ENCODE measurements at regions of chr1 and their contacts with region 1.

Region 1: DNA sequence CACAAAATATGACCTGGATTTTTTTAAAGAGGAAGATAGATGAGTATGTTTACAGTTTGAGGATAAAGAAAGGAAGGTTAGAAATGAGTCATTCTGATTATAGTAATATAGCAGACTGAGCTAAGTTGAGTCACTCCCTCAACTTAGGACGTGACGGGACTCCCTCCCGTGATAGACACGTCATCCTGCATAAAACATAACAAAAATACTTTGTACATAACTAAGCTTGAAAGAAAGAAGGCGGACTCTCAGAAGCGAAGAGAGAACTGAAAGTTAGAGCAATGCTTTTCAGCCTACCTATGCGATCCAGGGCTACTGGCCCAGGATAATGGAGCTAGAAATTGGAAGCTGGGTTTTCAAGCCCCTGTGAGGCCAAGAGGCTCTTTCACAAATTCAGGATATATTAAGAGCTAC is 53.0 kb upstream of the DESI2 start:
- DNase-seq: peak; percentile 43 to 91
- H3K4me3 ChIP-seq: peak overlapping the region; percentile 57; the same call in 1 of the 2 replicates
- H3K27ac ChIP-seq: peak overlapping the region; percentile 79
- H3K4me1 ChIP-seq: peaks cover 18% of the 10 kb centered on the region
- H3K27me3 ChIP-seq: no peaks in the 10 kb centered on the region
- CTCF ChIP-seq: no peak

Region 2: GRCh38 chr1:244461245-244462071 is 138.5 kb before region 1 on chr1 and contains the start of gene CATSPERE:
- CTCF ChIA-PET with region 1: no interaction called
- POLR2A ChIA-PET with region 1: no interaction called
- intact Hi-C with region 1: loop called (anchors 2 kb)
- DNase-seq: peak; percentile 76 to 93
- H3K4me3 ChIP-seq: peak within 1 kb of the TSS; percentile 55
- H3K27ac ChIP-seq: peak within 1 kb of the TSS; percentile 9; the same call in 1 of the 2 replicates
- H3K4me1 ChIP-seq: peaks cover 11% of the 10 kb centered on the region
- H3K27me3 ChIP-seq: no peaks in the 10 kb centered on the region
- CTCF ChIP-seq: no peak
- total RNA-seq, gene CATSPERE: 0.30 and 1.2 TPM in 2 replicates

Region 3: DNA sequence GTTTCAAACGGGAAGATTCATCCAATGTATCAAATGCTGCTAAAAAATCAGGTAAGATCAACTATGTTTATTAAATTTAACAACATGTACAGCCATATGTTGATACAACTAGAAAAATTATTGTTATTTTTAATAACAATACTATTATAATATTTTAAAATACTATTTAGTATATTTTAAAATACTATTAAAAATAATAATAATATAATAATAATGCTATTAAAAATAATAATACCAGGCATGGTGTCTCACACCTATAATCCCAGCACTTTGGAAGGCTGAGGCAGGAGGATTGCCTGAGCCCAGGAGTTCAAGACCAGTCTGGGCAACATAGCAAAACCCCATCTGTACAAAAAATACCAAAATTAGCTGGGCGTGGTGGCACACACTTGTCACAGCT is 84.3 kb before region 1 on chr1:
- CTCF ChIA-PET with region 1: no interaction called
- POLR2A ChIA-PET with region 1: no interaction called
- intact Hi-C with region 1: no loop called
- DNase-seq: no peak
- H3K4me3 ChIP-seq: no peak overlapping the region
- H3K27ac ChIP-seq: no peak overlapping the region
- H3K4me1 ChIP-seq: no peaks in the 10 kb centered on the region
- H3K27me3 ChIP-seq: no peaks in the 10 kb centered on the region
- CTCF ChIP-seq: no peak

Region 4: DNA sequence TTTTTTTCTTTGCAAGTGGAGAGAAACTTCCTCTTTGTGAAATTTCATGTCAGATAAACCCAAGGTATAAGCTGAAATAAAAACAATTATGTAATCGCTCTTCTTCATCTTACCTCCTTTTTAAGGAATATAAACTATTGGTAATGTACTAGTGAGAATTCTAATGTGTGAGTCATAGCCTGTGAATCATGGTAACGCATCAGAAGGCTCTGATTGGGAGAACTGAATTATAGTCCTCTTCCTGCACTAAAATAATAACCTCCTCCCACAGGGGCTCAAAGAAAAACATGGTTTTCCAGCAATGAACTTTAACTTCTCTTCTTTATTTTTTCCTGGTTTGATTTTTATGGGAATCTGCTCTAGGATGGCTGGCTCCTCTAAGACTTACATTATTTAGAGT is 178.4 kb after region 1 on chr1:
- CTCF ChIA-PET with region 1: interaction called, 4 read pairs
- POLR2A ChIA-PET with region 1: interaction called, 14 read pairs
- intact Hi-C with region 1: no loop called
- DNase-seq: peak in 1 of 2 experiments; percentile 61
- H3K4me3 ChIP-seq: no peak overlapping the region
- H3K27ac ChIP-seq: no peak overlapping the region
- H3K4me1 ChIP-seq: 0 out of 2 replicates have a peak, but pooled peaks cover 10% of the 10 kb centered on the region
- H3K27me3 ChIP-seq: no peaks in the 10 kb centered on the region
- CTCF ChIP-seq: no peak

Region 5: DNA sequence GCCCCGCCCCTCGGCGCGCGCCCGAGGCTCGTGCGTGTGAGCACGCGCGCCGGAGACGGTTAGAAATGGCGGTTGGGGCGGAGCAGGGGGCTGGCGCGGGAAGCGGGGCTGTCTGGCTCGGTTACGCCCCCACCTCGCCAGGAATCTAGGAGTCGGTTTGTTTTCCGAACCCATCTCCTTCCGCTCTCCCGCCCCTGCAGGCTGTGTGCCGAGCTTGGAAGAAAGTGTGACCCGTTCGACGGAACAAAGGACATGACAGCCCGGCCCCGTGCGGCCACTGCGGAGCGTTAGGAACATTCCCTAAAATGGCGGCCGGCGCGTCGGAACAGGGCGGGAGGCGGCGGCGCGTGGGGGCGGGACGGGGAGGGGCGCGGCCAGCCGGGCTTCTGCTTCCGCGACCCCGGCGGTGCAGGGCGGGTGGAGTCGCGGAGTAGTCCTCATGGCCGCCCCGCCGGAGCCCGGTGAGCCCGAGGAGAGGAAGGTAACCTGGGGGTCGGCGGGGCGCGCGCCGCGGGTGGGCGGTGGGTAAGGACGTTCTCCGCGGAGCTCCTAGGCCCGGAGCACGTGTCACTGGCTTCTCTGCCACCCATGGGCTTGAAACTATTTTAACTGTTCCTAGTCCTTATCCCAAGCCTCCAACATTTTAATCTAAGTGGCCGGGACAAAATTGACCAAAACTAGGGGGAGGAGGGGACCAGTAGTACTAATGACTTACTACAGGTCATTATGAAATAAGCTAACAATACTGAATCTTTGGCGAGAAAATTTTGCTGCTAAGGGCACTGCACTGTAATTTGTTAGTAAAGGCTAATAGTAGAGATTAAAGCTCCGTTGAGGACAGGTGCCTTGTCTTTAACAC is 235.6 kb after region 1 on chr1 and contains the start of gene COX20:
- CTCF ChIA-PET with region 1: interaction called, 4 read pairs
- POLR2A ChIA-PET with region 1: no interaction called
- intact Hi-C with region 1: loop called (anchors 2 kb)
- DNase-seq: peak in 1 of 2 experiments; percentile 75
- H3K4me3 ChIP-seq: peak within 1 kb of the TSS; percentile 79
- H3K27ac ChIP-seq: peak within 1 kb of the TSS; percentile 98
- H3K4me1 ChIP-seq: peaks cover 22% of the 10 kb centered on the region
- H3K27me3 ChIP-seq: no peaks in the 10 kb centered on the region
- CTCF ChIP-seq: no peak
- total RNA-seq, gene COX20: 34.5 and 40.7 TPM in 2 replicates

Region 6: DNA sequence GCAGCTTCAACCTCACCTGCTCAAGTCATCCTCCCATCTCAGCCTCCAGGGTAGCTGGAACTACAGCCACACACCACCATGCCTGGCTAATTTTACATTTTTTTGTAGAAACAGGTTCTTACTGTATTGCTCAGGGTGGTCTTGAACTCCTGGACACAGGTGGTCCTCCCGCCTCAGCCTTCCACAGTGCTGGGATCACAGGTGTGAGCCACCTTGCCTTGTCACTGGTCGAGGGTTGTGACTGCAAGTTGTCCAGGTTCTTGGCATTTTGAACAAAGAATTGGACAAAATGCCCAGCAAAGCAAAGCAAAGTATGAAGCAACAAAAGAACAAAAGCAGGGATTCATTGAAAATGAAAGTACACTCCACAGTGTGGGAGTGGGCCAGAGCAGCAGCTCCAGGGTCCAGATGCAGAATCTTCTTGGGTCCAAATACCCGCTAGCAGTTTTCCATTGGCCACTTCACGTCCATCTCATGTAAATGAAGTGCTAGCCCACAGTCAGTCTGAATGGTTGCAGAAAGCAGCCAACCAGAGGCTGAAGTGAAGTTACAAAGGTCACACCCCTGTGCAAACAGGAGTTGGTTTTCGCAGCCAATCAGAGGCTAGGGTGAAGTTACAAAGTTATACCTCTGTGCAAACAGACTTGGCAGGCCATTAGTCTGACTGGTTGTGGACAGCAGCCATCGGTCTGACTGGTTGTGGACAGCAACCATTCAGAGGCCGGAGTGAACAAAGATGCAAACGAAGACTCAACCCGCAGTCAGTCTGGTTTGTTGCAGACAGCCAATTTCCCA is 445.3 kb after region 1 on chr1:
- CTCF ChIA-PET with region 1: no interaction called
- POLR2A ChIA-PET with region 1: interaction called, 4 read pairs
- intact Hi-C with region 1: loop called (anchors 2 kb)
- DNase-seq: no peak
- H3K4me3 ChIP-seq: no peak overlapping the region
- H3K27ac ChIP-seq: no peak overlapping the region
- H3K4me1 ChIP-seq: no peaks in the 10 kb centered on the region
- H3K27me3 ChIP-seq: peaks cover 36% of the 10 kb centered on the region; the same call in 1 of the 2 replicates
- CTCF ChIP-seq: no peak

Measured in PC-9 (cell line).